MCF 10A (cell line): ENCODE measurements at regions of chr5 and their contacts with region 1.

Region 1: DNA sequence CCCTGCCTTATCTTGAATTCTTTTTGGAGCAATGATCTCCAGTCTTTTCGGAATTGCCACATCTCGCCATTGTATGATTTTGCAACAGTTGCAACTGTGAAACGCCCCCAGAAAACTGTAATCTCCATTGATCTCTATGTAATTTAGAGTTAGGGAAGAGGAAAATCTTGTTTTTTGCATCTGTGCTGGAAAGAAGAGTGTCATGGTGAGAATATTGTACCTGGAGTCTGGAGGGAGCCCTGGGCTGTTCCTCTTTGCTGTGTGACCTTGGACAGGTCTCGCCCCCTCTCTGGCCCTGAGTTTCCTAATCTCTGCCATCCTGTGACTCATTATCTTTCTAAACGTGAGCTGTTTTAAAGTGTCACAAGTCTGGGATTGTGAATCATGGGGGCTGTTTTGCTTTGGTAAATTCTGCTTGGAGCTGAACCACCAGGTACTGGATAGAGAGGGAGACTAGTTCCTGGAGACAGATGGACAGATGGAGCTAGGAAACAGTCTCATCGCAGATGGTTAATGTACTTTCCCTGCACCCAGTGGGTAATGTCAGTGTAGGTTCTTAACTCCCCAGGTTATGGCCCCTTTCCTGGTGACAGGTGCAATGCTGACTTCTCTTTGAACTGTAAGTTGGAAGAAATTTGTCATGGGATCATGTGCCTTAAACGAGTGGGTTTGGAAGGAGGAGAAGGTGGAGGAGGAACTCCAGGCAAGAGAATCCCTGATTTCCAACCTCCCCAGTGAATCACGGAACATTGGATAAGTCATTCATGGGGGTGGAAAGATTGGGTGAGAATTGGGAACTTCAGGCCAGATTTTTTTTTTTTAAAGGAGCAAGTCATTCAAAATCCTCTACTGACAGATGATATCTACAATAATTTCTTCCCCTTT is 19.6 kb downstream of the PPARGC1B start:
- DNase-seq: peak; percentile 90
- H3K4me3 Mint-ChIP-seq: peak overlapping the region; percentile 45
- H3K27ac Mint-ChIP-seq: peak overlapping the region; percentile 63
- H3K4me1 Mint-ChIP-seq: peaks cover 64% of the 10 kb centered on the region
- H3K27me3 Mint-ChIP-seq: no peaks in the 10 kb centered on the region
- CTCF ChIP-seq: no peak

Region 2: GRCh38 chr5:149759986-149760853 is 10.5 kb after region 1 on chr5:
- CTCF ChIA-PET with region 1: interaction called, 5 read pairs
- POLR2A ChIA-PET with region 1: interaction called, 26 read pairs
- intact Hi-C with region 1: no loop called
- DNase-seq: no peak
- H3K4me3 Mint-ChIP-seq: no peak overlapping the region
- H3K27ac Mint-ChIP-seq: no peak overlapping the region
- H3K4me1 Mint-ChIP-seq: peaks cover 22% of the 10 kb centered on the region
- H3K27me3 Mint-ChIP-seq: no peaks in the 10 kb centered on the region
- CTCF ChIP-seq: no peak

Region 3: DNA sequence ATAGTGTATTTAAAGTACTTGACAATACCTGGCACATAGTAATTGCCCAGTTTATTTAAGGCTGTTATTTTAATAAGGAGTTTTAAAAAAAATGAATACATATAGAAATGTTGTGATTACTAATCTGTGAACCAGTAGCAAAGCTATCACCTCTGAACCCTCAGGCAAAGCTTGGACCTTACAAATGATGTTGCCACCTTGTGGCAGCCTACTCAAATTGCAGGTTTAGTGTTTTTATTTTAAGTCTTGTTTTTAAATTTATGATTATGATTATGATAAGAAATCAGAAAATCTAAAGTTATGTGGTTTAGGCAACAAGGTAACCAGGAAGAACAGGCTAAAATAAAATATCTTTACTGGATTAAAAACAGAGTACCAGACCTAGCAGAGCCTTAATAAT is 16.2 kb after region 1 on chr5:
- CTCF ChIA-PET with region 1: interaction called, 5 read pairs
- POLR2A ChIA-PET with region 1: interaction called, 20 read pairs
- intact Hi-C with region 1: no loop called
- DNase-seq: peak; percentile 59
- H3K4me3 Mint-ChIP-seq: no peak overlapping the region
- H3K27ac Mint-ChIP-seq: no peak overlapping the region
- H3K4me1 Mint-ChIP-seq: peaks cover 10% of the 10 kb centered on the region
- H3K27me3 Mint-ChIP-seq: no peaks in the 10 kb centered on the region
- CTCF ChIP-seq: peak; percentile 44

Region 4: GRCh38 chr5:149775785-149776184 is 26.1 kb after region 1 on chr5:
- CTCF ChIA-PET with region 1: interaction called, 5 read pairs
- POLR2A ChIA-PET with region 1: interaction called, 10 read pairs
- intact Hi-C with region 1: no loop called
- DNase-seq: peak; percentile 63
- H3K4me3 Mint-ChIP-seq: no peak overlapping the region
- H3K27ac Mint-ChIP-seq: no peak overlapping the region
- H3K4me1 Mint-ChIP-seq: peaks cover 43% of the 10 kb centered on the region
- H3K27me3 Mint-ChIP-seq: no peaks in the 10 kb centered on the region
- CTCF ChIP-seq: peak; percentile 61

Region 5: DNA sequence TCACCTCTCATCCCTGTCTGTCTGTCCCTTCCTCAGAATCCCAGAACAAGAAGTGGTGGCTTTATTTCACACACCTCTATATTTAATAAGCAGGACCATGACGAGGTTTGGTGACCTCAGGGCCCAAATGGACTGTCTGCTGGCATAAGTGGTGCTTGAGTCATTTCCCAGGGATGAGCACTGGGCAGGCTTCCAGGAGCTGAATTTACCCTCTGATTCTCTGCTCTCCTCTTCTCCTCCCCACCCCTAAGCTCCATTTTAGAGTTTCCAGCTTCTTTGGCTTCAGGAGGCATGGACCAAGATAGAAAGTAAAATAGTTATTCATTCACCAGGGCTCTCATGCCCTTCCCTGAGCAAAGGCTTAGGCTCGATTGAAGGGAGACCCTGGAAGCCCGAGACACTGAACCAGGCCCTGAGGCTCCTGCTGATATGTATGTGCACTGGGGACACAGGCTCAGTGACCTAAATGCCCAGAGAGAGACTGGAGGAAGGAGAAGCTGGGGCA is 49.4 kb after region 1 on chr5:
- CTCF ChIA-PET with region 1: interaction called, 3 read pairs
- POLR2A ChIA-PET with region 1: interaction called, 12 read pairs
- intact Hi-C with region 1: no loop called
- DNase-seq: peak; percentile 93
- H3K4me3 Mint-ChIP-seq: peak overlapping the region; percentile 12
- H3K27ac Mint-ChIP-seq: peak overlapping the region; percentile 43
- H3K4me1 Mint-ChIP-seq: peaks cover 38% of the 10 kb centered on the region
- H3K27me3 Mint-ChIP-seq: no peaks in the 10 kb centered on the region
- CTCF ChIP-seq: no peak